ENCODE measurements at regions of chr11 and their contacts with region 1.

Region 1: GRCh38 chr11:10808553-10809372 is at the start of gene EIF4G2:
- DNase-seq: peak; percentile 98
- H3K4me3 ChIP-seq: peak within 1 kb of the TSS; percentile 83 to 94
- H3K27ac ChIP-seq: peak within 1 kb of the TSS; percentile 97
- H3K4me1 ChIP-seq: peaks cover 22 to 23% of the 10 kb centered on the region in 2 donors
- H3K27me3 ChIP-seq: no peaks in the 10 kb centered on the region
- CTCF ChIP-seq: peak in 2 of 4 experiments; percentile 3 to 9
- POLR2A ChIP-seq: peak; percentile 97 to 98
- total RNA-seq, gene EIF4G2: 286 to 726 (median 581) TPM

Region 2: GRCh38 chr11:10857709-10858438 is 49.1 kb after region 1 on chr11 and contains the start of gene ZBED5:
- intact Hi-C with region 1: loop called (anchors 5 kb)
- DNase-seq: peak; percentile 97 to 98
- H3K4me3 ChIP-seq: peak within 1 kb of the TSS; percentile 94 to 96
- H3K27ac ChIP-seq: peak within 1 kb of the TSS; percentile 99
- H3K4me1 ChIP-seq: peaks cover 0 to 15% of the 10 kb centered on the region in 2 donors
- H3K27me3 ChIP-seq: no peaks in the 10 kb centered on the region
- CTCF ChIP-seq: peak in 2 of 4 experiments; percentile 16 to 20
- POLR2A ChIP-seq: peak; percentile 92 to 98
- total RNA-seq, gene ZBED5: 24.6 to 82.7 (median 61.0) TPM

Region 3: GRCh38 chr11:10906513-10906912 is 97.8 kb after region 1 on chr11:
- intact Hi-C with region 1: loop called (anchors 10 kb)
- DNase-seq: no peak
- H3K4me3 ChIP-seq: no peak overlapping the region
- H3K27ac ChIP-seq: no peak overlapping the region
- H3K4me1 ChIP-seq: no peaks in the 10 kb centered on the region
- H3K27me3 ChIP-seq: no peaks in the 10 kb centered on the region
- CTCF ChIP-seq: no peak
- POLR2A ChIP-seq: no peak